GM12878 (cell line): ENCODE measurements at regions of chr17 and their contacts with region 1.

Region 1: DNA sequence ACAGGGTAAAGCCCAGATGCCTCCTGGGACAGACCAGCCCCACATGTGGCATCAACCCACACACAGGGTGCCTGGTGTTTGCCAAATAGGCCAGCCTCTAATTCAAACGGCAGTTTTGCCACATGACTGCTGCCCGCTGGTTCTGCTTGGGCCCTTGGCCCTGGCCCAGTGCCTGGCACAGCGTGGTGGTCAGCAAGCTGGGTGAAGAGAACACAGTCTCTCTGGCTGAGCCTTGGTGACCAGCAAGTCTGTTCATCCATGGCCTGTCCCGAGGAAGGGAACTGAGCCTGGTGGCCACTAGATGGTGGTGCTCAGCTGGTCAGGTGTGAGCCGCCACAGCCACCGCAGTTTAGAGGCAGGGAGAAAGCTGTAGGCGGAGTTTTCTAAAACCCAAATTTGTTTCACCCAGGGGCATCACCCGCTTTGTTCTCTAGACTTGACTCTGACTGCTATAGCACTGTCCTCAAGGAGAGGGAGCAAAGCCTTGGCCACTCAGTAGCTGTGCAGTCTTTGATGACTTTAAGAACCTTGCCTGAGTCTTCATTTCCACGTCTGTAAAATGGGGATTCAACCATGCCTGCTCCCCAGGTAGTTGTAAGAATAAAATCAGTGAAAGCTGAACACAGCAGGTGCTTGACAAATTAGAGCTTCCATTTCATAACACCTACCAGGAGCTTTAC is 4.7 kb upstream of the GFAP start:
- DNase-seq: peak; percentile 54
- ATAC-seq: peak; percentile 97
- H3K4me3 ChIP-seq: no peak overlapping the region
- H3K27ac ChIP-seq: no peak overlapping the region
- H3K4me1 ChIP-seq: peaks cover 12% of the 10 kb centered on the region
- H3K27me3 ChIP-seq: peaks cover 0 to 3% of the 10 kb centered on the region in 2 experiments; a peak in 1 of 4 replicates
- CTCF ChIP-seq: peak; percentile 83 to 98 (median 88); a peak in 5 of 6 replicates
- EP300 ChIP-seq: no peak
- POLR2A ChIP-seq: no peak
- RAD21 ChIP-seq: peak; percentile 86

Region 2: GRCh38 chr17:44628243-44629188 is 291.5 kb before region 1 on chr17:
- CTCF ChIA-PET with region 1: no interaction called
- POLR2A ChIA-PET with region 1: no interaction called
- RAD21 ChIA-PET with region 1: no interaction called
- SMC1A ChIA-PET with region 1: no interaction called
- in situ Hi-C with region 1: no loop called
- intact Hi-C with region 1: no loop called
- DNase-seq: peak; percentile 46
- ATAC-seq: peak; percentile 100
- H3K4me3 ChIP-seq: peak overlapping the region; percentile 57
- H3K27ac ChIP-seq: peak overlapping the region; percentile 61
- H3K4me1 ChIP-seq: peaks cover 9% of the 10 kb centered on the region
- H3K27me3 ChIP-seq: no peaks in the 10 kb centered on the region
- CTCF ChIP-seq: no peak
- EP300 ChIP-seq: no peak
- POLR2A ChIP-seq: peak; percentile 65
- RAD21 ChIP-seq: no peak

Region 3: GRCh38 chr17:44850612-44851011 is 69.4 kb before region 1 on chr17:
- CTCF ChIA-PET with region 1: no interaction called
- POLR2A ChIA-PET with region 1: no interaction called
- RAD21 ChIA-PET with region 1: no interaction called
- SMC1A ChIA-PET with region 1: no interaction called
- in situ Hi-C with region 1: no loop called
- intact Hi-C with region 1: no loop called
- DNase-seq: no peak
- ATAC-seq: no peak
- H3K4me3 ChIP-seq: no peak overlapping the region
- H3K27ac ChIP-seq: no peak overlapping the region
- H3K4me1 ChIP-seq: no peaks in the 10 kb centered on the region
- H3K27me3 ChIP-seq: no peaks in the 10 kb centered on the region
- CTCF ChIP-seq: no peak
- EP300 ChIP-seq: no peak
- POLR2A ChIP-seq: no peak
- RAD21 ChIP-seq: no peak

Region 4: GRCh38 chr17:44947461-44948314 is 27.7 kb after region 1 on chr17 and contains the start of gene KIF18B:
- CTCF ChIA-PET with region 1: interaction called, 29 read pairs
- POLR2A ChIA-PET with region 1: interaction called, 10 read pairs
- RAD21 ChIA-PET with region 1: interaction called, 8 read pairs
- SMC1A ChIA-PET with region 1: interaction called, 10 read pairs
- in situ Hi-C with region 1: no loop called
- intact Hi-C with region 1: no loop called
- DNase-seq: peak; percentile 85
- ATAC-seq: peak; percentile 98
- H3K4me3 ChIP-seq: peak within 1 kb of the TSS; percentile 72
- H3K27ac ChIP-seq: peak within 1 kb of the TSS; percentile 90
- H3K4me1 ChIP-seq: 0 out of 2 replicates have a peak, but pooled peaks cover 4% of the 10 kb centered on the region
- H3K27me3 ChIP-seq: no peaks in the 10 kb centered on the region
- CTCF ChIP-seq: no peak; a peak in 1 of 6 replicates
- EP300 ChIP-seq: no peak
- POLR2A ChIP-seq: peak; percentile 98
- RAD21 ChIP-seq: no peak
- polyA plus RNA-seq, gene KIF18B: 2.8 to 3.1 TPM

Region 5: GRCh38 chr17:45013021-45013997 is 93.3 kb after region 1 on chr17:
- CTCF ChIA-PET with region 1: interaction called, 156 read pairs
- POLR2A ChIA-PET with region 1: interaction called, 13 read pairs
- RAD21 ChIA-PET with region 1: interaction called, 82 read pairs
- SMC1A ChIA-PET with region 1: interaction called, 90 read pairs
- in situ Hi-C with region 1: no loop called
- intact Hi-C with region 1: no loop called
- DNase-seq: no peak
- ATAC-seq: no peak
- H3K4me3 ChIP-seq: no peak overlapping the region
- H3K27ac ChIP-seq: no peak overlapping the region
- H3K4me1 ChIP-seq: no peaks in the 10 kb centered on the region
- H3K27me3 ChIP-seq: no peaks in the 10 kb centered on the region; a peak in 2 of 4 replicates
- CTCF ChIP-seq: no peak
- EP300 ChIP-seq: no peak
- POLR2A ChIP-seq: no peak
- RAD21 ChIP-seq: no peak

Region 6: GRCh38 chr17:45098869-45099616 is 179.0 kb after region 1 on chr17:
- CTCF ChIA-PET with region 1: interaction called, 70 read pairs
- POLR2A ChIA-PET with region 1: no interaction called
- RAD21 ChIA-PET with region 1: interaction called, 26 read pairs
- SMC1A ChIA-PET with region 1: interaction called, 38 read pairs
- in situ Hi-C with region 1: loop called (anchors 10 kb)
- intact Hi-C with region 1: loop called (anchors 1 kb)
- DNase-seq: no peak
- ATAC-seq: peak; percentile 100
- H3K4me3 ChIP-seq: no peak overlapping the region
- H3K27ac ChIP-seq: no peak overlapping the region
- H3K4me1 ChIP-seq: no peaks in the 10 kb centered on the region
- H3K27me3 ChIP-seq: no peaks in the 10 kb centered on the region
- CTCF ChIP-seq: peak; percentile 88 to 93 (median 91)
- EP300 ChIP-seq: no peak
- POLR2A ChIP-seq: no peak
- RAD21 ChIP-seq: peak; percentile 70